ENCODE measurements at regions of chr17 and their contacts with region 1.

Region 1: GRCh38 chr17:74442670-74443515 is 11.0 kb downstream of the GPRC5C start:
- DNase-seq: peak; percentile 89
- ATAC-seq: peak; percentile 89
- H3K4me3 ChIP-seq: peak overlapping the region; percentile 39 to 54
- H3K27ac ChIP-seq: peak overlapping the region; percentile 84
- H3K4me1 ChIP-seq: peaks cover 24 to 26% of the 10 kb centered on the region in 2 experiments
- H3K27me3 ChIP-seq: no peaks in the 10 kb centered on the region
- CTCF ChIP-seq: no peak
- POLR2A ChIP-seq: no peak
- RAD21 ChIP-seq: no peak; the same call in 1 of the 2 replicates

Region 2: GRCh38 chr17:74212913-74213791 is 229.7 kb before region 1 on chr17 and contains the start of gene TTYH2:
- CTCF ChIA-PET with region 1: no interaction called
- POLR2A ChIA-PET with region 1: no interaction called
- RAD21 ChIA-PET with region 1: no interaction called
- intact Hi-C with region 1: loop called (anchors 5 kb)
- DNase-seq: peak; percentile 81
- ATAC-seq: peak; percentile 74
- H3K4me3 ChIP-seq: peak within 1 kb of the TSS; percentile 75 to 77
- H3K27ac ChIP-seq: peak within 1 kb of the TSS; percentile 76
- H3K4me1 ChIP-seq: peaks cover 25 to 57% of the 10 kb centered on the region in 2 experiments
- H3K27me3 ChIP-seq: no peaks in the 10 kb centered on the region
- CTCF ChIP-seq: peak in 2 of 3 experiments; percentile 46 to 51; a peak in 4 of 6 replicates
- POLR2A ChIP-seq: peak; percentile 50
- RAD21 ChIP-seq: no peak
- total RNA-seq, gene TTYH2: 10.8 TPM

Region 3: GRCh38 chr17:74417178-74418045 is 25.5 kb before region 1 on chr17:
- CTCF ChIA-PET with region 1: interaction called, 8 read pairs
- POLR2A ChIA-PET with region 1: no interaction called
- RAD21 ChIA-PET with region 1: no interaction called
- intact Hi-C with region 1: loop called (anchors 1 kb)
- DNase-seq: peak; percentile 98
- ATAC-seq: peak; percentile 95
- H3K4me3 ChIP-seq: peak overlapping the region; percentile 23 to 52
- H3K27ac ChIP-seq: peak overlapping the region; percentile 62
- H3K4me1 ChIP-seq: peaks cover 36 to 51% of the 10 kb centered on the region in 2 experiments
- H3K27me3 ChIP-seq: no peaks in the 10 kb centered on the region
- CTCF ChIP-seq: no peak
- POLR2A ChIP-seq: no peak
- RAD21 ChIP-seq: peak; percentile 46

Region 4: DNA sequence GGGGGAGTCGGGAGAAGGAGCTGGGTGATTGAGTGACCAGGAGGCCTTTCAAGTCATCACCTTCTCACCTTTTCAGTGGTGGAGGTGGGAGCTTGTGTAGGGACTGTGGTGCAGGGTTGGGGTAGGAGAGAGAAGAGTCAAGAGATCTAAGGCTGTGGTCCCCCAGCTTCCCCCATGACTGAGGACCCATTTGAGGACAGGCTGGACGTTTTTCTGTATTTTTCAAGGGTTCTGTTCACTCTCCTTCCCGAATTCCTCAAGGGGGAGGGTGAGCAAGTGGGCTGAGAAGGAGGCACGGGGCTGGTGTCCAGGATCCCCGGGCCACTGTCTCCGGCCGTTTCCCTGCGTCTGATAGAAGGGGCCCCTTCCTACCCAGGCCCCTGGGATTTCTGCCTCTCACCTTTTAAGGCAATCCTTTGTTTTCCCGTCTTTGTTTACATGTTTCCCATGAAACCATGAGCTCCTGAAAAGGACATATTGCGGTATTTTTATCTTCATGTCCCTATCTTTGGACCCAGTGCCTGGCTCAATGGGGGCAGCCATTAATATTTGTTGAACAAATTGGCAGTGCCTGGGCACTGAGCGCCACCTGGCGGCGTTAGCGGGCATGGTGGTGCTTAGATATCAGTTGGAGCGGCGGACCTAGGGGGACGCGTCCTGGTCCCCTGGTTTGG is 14.4 kb after region 1 on chr17:
- CTCF ChIA-PET with region 1: interaction called, 6 read pairs
- POLR2A ChIA-PET with region 1: interaction called, 12 read pairs
- RAD21 ChIA-PET with region 1: interaction called, 4 to 6 read pairs
- intact Hi-C with region 1: no loop called
- DNase-seq: peak; percentile 63
- ATAC-seq: peak; percentile 56
- H3K4me3 ChIP-seq: no peak overlapping the region
- H3K27ac ChIP-seq: no peak overlapping the region
- H3K4me1 ChIP-seq: peaks cover 22 to 29% of the 10 kb centered on the region in 2 experiments
- H3K27me3 ChIP-seq: no peaks in the 10 kb centered on the region
- CTCF ChIP-seq: peak; percentile 97 to 100 (median 99)
- POLR2A ChIP-seq: no peak
- RAD21 ChIP-seq: peak; percentile 100

Region 5: GRCh38 chr17:74743755-74744154 is 300.9 kb after region 1 on chr17:
- CTCF ChIA-PET with region 1: no interaction called
- POLR2A ChIA-PET with region 1: no interaction called
- RAD21 ChIA-PET with region 1: no interaction called
- intact Hi-C with region 1: no loop called
- DNase-seq: no peak
- ATAC-seq: no peak
- H3K4me3 ChIP-seq: no peak overlapping the region
- H3K27ac ChIP-seq: no peak overlapping the region
- H3K4me1 ChIP-seq: peaks cover 17 to 23% of the 10 kb centered on the region in 2 experiments; a peak in 3 of 4 replicates
- H3K27me3 ChIP-seq: no peaks in the 10 kb centered on the region
- CTCF ChIP-seq: no peak
- POLR2A ChIP-seq: no peak
- RAD21 ChIP-seq: no peak

Measured in HCT116 (cell line).